AG04450 (cell line): ENCODE measurements at regions of chr10 and their contacts with region 1.

Region 1: GRCh38 chr10:22988581-22989360 is 60.9 kb downstream of the ARMC3 start:
- DNase-seq: peak; percentile 23
- H3K4me3 ChIP-seq: no peak overlapping the region
- H3K27ac ChIP-seq: no peak overlapping the region
- H3K27me3 ChIP-seq: peaks cover 4% of the 10 kb centered on the region
- CTCF ChIP-seq: peak; percentile 93

Region 2: GRCh38 chr10:21993360-21994001 is 995.3 kb before region 1 on chr10:
- CTCF ChIA-PET with region 1: interaction called, 31 read pairs
- POLR2A ChIA-PET with region 1: no interaction called
- DNase-seq: no peak
- H3K4me3 ChIP-seq: no peak overlapping the region
- H3K27ac ChIP-seq: no peak overlapping the region
- H3K27me3 ChIP-seq: no peaks in the 10 kb centered on the region
- CTCF ChIP-seq: peak; percentile 54

Region 3: DNA sequence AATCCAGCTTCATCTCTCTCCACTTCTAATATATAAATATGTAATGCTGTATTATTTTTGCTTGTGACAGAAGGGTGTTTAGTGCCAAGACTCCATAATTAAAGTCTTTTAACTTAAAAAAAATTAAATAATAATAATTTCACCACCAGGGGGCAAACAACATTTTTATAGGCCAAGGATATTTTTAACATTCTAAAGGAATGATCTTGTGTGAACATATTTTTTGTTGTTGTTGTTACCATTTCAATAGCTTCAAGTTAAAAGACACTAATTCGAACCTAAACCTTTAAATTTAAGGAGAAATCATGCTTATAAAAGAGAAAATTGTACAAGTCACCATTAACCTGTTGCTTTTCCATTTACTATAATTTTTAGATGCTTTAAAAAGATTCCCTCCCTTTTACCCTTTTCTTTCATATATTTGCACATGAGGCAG is 977.8 kb before region 1 on chr10:
- CTCF ChIA-PET with region 1: interaction called, 101 read pairs
- POLR2A ChIA-PET with region 1: no interaction called
- DNase-seq: no peak
- H3K4me3 ChIP-seq: no peak overlapping the region
- H3K27ac ChIP-seq: no peak overlapping the region
- H3K27me3 ChIP-seq: no peaks in the 10 kb centered on the region
- CTCF ChIP-seq: no peak

Region 4: DNA sequence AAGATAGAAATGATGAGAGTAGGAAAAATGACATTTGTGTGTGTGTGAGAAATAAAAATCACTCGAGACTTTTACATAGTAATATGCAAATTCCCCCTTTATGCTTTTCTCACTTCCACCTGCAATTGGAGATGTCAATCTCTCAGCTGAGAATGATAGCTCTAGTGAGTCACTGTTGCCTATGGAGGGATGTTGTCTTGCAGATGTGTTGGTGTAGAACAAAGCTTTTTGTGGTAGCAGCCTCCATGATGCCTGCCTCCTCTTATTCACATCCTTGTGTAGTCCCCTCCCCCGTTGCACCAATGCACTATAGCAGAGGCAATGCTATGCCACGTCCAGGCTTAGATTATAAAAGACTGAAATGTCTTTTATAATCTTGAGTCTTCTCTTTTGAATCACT is 609.7 kb before region 1 on chr10:
- CTCF ChIA-PET with region 1: interaction called, 12 read pairs
- POLR2A ChIA-PET with region 1: no interaction called
- DNase-seq: no peak
- H3K4me3 ChIP-seq: no peak overlapping the region
- H3K27ac ChIP-seq: no peak overlapping the region
- H3K27me3 ChIP-seq: peaks cover 3% of the 10 kb centered on the region
- CTCF ChIP-seq: no peak

Region 5: DNA sequence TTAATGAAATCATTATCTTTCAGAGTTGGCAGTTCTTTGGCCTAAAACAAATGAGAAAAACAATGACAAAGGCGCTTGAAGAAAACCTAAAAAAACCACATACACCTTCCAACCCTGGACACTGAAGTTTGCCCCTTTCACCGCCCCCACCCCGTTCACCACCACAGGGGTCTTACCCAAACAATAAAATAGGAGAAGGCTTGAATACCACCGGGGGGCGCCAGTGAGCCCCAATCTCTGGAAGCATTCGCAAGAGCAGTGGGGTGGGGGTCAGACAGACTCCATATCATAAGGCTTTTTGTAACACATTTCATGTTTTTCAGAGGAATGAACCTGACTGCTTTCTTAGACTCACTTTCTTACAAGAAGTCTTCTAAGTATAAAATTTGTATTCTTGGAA is 438.0 kb before region 1 on chr10:
- CTCF ChIA-PET with region 1: interaction called, 12 read pairs
- POLR2A ChIA-PET with region 1: no interaction called
- DNase-seq: no peak
- H3K4me3 ChIP-seq: no peak overlapping the region
- H3K27ac ChIP-seq: no peak overlapping the region
- H3K27me3 ChIP-seq: no peaks in the 10 kb centered on the region
- CTCF ChIP-seq: peak; percentile 53

Region 6: GRCh38 chr10:22573820-22574569 is 414.8 kb before region 1 on chr10:
- CTCF ChIA-PET with region 1: interaction called, 79 read pairs
- POLR2A ChIA-PET with region 1: no interaction called
- DNase-seq: no peak
- H3K4me3 ChIP-seq: no peak overlapping the region
- H3K27ac ChIP-seq: no peak overlapping the region
- H3K27me3 ChIP-seq: no peaks in the 10 kb centered on the region
- CTCF ChIP-seq: peak; percentile 60